ENCODE measurements at regions of chr2 and their contacts with region 1.

Region 1: GRCh38 chr2:225074366-225074765 is 32.1 kb upstream of the DOCK10 start:
- H3K4me3 Mint-ChIP-seq: no peak overlapping the region
- H3K27ac Mint-ChIP-seq: no peak overlapping the region
- H3K4me1 Mint-ChIP-seq: peaks cover 34% of the 10 kb centered on the region
- H3K27me3 Mint-ChIP-seq: peaks cover 3% of the 10 kb centered on the region

Region 2: GRCh38 chr2:225104971-225105370 is 30.6 kb after region 1 on chr2:
- intact Hi-C with region 1: loop called (anchors 5 kb)
- H3K4me3 Mint-ChIP-seq: no peak overlapping the region
- H3K27ac Mint-ChIP-seq: no peak overlapping the region
- H3K4me1 Mint-ChIP-seq: peaks cover 10% of the 10 kb centered on the region
- H3K27me3 Mint-ChIP-seq: no peaks in the 10 kb centered on the region

Region 3: GRCh38 chr2:226548732-226549131 is 1474.4 kb after region 1 on chr2:
- intact Hi-C with region 1: no loop called
- H3K4me3 Mint-ChIP-seq: no peak overlapping the region
- H3K27ac Mint-ChIP-seq: no peak overlapping the region
- H3K4me1 Mint-ChIP-seq: no peaks in the 10 kb centered on the region
- H3K27me3 Mint-ChIP-seq: no peaks in the 10 kb centered on the region